PC-3 (cell line): ENCODE measurements at regions of chr5 and their contacts with region 1.

Region 1: DNA sequence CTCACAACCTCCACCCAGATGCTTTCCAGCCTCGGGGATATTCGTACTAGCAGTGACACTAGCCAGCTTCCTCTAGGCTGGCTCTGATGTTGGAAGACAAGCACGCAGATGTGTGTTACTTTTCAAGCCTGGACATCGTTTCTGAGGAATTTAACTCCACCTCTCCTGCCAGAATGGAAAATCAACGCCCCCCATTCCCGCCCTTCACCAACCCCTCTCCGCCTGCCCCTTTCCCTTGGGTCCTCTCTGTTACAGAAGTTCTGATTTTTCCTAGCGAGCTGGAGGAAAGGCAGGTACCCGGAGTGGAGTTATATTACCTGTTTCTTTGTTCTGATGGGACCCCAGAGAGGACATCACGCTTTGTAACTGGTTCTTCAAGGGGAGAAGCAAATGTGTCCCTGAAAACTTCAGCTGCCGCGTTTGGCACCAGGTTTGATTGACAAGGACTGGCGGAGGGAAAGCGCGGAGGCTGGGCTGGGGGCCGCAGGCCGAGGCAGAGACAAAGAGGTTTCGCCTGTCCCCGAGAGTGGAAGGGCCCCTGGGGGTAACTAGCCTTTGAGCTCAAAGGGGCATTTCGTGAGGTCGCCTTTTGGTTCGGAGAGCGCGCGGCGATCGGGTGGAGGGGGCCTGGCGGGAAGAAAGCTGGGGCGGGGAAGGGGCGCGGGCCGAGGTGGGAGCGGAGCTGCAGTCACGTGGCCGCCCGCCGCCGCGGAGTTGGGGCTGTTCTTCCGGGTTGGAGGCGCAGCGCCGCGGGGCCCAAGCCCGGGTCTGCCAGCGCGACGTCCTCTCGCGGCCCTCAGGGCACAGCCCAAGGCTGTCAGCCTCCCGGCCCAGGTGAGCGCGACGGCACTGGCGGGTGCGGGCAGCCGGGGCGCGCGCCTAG is at the start of gene NNT:
- DNase-seq: peak; percentile 52
- ATAC-seq: peak; percentile 74
- H3K4me3 ChIP-seq: peak within 1 kb of the TSS; percentile 75
- H3K27ac ChIP-seq: peak within 1 kb of the TSS; percentile 19
- H3K4me1 ChIP-seq: peaks cover 22% of the 10 kb centered on the region
- H3K27me3 ChIP-seq: no peaks in the 10 kb centered on the region
- CTCF ChIP-seq: no peak
- total RNA-seq, gene NNT: 15.1 and 15.6 TPM in 2 replicates

Region 2: GRCh38 chr5:43556857-43557542 is 45.7 kb before region 1 on chr5 and contains the start of gene PAIP1:
- CTCF ChIA-PET with region 1: no interaction called
- POLR2A ChIA-PET with region 1: no interaction called
- intact Hi-C with region 1: loop called (anchors 2 kb)
- DNase-seq: peak; percentile 89
- ATAC-seq: peak; percentile 78
- H3K4me3 ChIP-seq: peak within 1 kb of the TSS; percentile 82
- H3K27ac ChIP-seq: peak within 1 kb of the TSS; percentile 65
- H3K4me1 ChIP-seq: peaks cover 25% of the 10 kb centered on the region
- H3K27me3 ChIP-seq: no peaks in the 10 kb centered on the region
- CTCF ChIP-seq: peak; percentile 70
- total RNA-seq, gene PAIP1: 117 and 142 TPM in 2 replicates